Naive thymus-derived CD4-positive, alpha-beta T cell (primary cell): ENCODE measurements at regions of chr11 and their contacts with region 1.

Region 1: DNA sequence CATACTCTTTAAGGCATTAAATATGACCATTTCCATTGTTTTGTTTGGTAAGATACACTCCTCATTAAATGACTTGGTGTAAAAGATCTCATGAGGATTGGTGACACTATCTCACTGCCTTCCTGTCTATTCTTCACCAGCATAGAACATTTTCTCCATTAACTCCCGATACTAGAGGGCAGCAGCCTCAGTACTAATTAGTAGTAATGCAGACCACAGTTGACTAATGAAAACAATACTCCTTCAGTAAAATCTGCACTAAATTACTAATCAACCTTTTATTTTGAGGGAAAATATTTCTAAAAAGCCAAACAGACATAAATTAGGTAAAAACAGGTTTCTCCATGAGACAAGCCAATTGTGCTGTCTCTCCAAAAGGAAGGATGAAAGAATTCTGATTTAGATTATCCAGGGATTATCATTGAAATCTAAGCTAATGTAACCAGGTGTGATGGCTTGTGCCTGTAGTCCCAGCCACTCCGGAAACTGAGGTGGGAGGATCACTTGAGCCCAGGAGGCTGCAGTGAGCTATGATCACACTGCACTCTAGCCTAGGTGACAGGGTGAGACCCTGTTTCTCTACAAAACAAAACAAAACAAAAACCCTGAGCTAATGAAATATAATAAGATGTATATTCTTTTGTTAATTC is 9.4 kb downstream of the PGM2L1 start:
- DNase-seq: peak in 8 of 9 donors; percentile 34 to 74 (median 64)
- ATAC-seq: peak; percentile 93
- H3K4me3 ChIP-seq: no peak overlapping the region
- H3K4me3 Mint-ChIP-seq: no peak overlapping the region
- H3K27ac ChIP-seq: no peak overlapping the region
- H3K27ac Mint-ChIP-seq: peak overlapping the region in 3 of 9 donors; percentile 10 to 82 (median 79)
- H3K4me1 ChIP-seq: peaks cover 0 to 3% of the 10 kb centered on the region in 2 donors
- H3K4me1 Mint-ChIP-seq: peaks cover 19 to 39% (median 33%) of the 10 kb centered on the region in 7 donors
- H3K27me3 ChIP-seq: no peaks in the 10 kb centered on the region
- H3K27me3 Mint-ChIP-seq: no peaks in the 10 kb centered on the region

Region 2: DNA sequence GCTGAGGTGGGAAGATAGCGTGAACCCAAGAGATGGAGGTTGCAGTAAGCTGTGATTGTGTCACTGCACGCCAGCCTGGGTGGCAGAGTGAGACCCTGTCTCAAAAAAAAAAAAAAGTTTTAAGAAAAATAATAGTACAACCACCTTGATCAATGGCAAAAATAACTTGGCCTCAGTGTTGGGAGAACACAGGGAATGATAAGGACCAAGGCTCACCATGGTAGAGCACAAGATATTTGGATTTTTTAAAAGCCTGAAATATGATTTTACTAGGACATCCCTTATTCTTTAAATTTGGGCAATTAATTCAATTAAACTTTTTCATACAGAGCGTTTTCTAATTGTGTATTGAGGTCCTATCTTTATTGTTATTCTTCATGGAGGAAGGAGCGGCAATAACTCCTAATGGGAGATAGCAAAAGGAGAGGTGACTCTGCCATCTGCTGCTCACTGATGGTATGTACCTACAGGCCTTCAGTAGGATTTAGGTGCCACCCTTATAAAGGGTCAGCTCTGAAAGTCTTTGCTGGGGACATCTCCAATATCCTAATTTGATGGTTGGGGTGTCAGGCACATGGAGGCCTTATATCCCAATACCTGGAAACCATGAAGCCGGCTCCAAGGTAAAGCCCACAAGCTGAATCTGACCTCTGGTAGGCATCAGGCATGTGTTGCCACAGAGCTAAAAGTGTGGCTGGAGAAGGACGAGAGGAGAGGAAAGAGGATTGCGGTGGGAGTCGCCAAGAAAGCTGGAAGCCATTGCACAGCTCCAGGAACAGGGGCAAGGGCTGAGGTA is 181.7 kb after region 1 on chr11:
- CTCF ChIA-PET with region 1: interaction called, 3 read pairs
- POLR2A ChIA-PET with region 1: no interaction called
- intact Hi-C with region 1: loop called (anchors 1 to 5 kb)
- DNase-seq: peak in 3 of 9 donors; percentile 13 to 16 (median 15)
- ATAC-seq: peak; percentile 65
- H3K4me3 ChIP-seq: no peak overlapping the region
- H3K4me3 Mint-ChIP-seq: no peak overlapping the region
- H3K27ac ChIP-seq: no peak overlapping the region
- H3K27ac Mint-ChIP-seq: no peak overlapping the region
- H3K4me1 ChIP-seq: no peaks in the 10 kb centered on the region
- H3K4me1 Mint-ChIP-seq: no peaks in the 10 kb centered on the region
- H3K27me3 ChIP-seq: no peaks in the 10 kb centered on the region
- H3K27me3 Mint-ChIP-seq: peaks cover 0 to 14% (median 0%) of the 10 kb centered on the region in 5 donors

Region 3: DNA sequence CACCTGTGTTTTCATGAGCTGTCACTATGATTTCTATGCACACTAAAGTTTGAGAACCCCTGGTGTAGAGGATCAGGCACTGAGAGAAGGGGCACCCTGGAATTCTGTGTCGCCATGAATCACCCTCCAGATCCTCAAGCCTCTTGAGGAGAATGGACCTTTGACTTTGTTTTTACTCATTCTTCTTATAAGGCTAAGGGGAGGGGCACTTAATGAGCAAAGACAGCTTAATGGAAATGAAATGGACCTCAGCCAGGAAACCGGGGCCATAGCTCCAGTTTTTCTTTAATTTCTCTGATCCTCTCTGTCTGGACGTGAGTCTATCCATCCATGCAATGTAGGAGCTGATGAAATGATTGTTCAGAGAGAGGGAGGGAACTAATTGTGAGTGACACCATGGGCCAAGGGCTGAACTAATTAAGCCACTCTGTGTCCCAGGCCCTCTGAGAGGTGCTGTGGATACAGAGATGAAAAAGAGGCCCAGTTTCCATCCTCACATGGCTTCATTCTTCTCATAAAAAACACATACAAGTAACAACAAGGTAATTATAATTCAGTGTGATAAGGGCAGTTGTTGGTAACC is 675.0 kb after region 1 on chr11:
- CTCF ChIA-PET with region 1: no interaction called
- POLR2A ChIA-PET with region 1: no interaction called
- intact Hi-C with region 1: no loop called
- DNase-seq: no peak
- ATAC-seq: no peak
- H3K4me3 ChIP-seq: no peak overlapping the region
- H3K4me3 Mint-ChIP-seq: no peak overlapping the region
- H3K27ac ChIP-seq: no peak overlapping the region
- H3K27ac Mint-ChIP-seq: no peak overlapping the region
- H3K4me1 ChIP-seq: no peaks in the 10 kb centered on the region
- H3K4me1 Mint-ChIP-seq: no peaks in the 10 kb centered on the region
- H3K27me3 ChIP-seq: peaks cover 0 to 3% of the 10 kb centered on the region in 2 donors
- H3K27me3 Mint-ChIP-seq: peaks cover 19 to 54% (median 38%) of the 10 kb centered on the region in 5 donors